CD4-positive, alpha-beta memory T cell (primary cell): ENCODE measurements at regions of chr2 and their contacts with region 1.

Region 1: GRCh38 chr2:32627814-32628579 is at the start of gene TTC27:
- DNase-seq: peak; percentile 94 to 98 (median 95)
- H3K4me3 ChIP-seq: peak within 1 kb of the TSS; percentile 66 to 77
- H3K4me3 Mint-ChIP-seq: peak within 1 kb of the TSS; percentile 91 to 97 (median 95)
- H3K27ac ChIP-seq: peak within 1 kb of the TSS; percentile 65
- H3K27ac Mint-ChIP-seq: peak within 1 kb of the TSS; percentile 81 to 98 (median 94)
- H3K4me1 ChIP-seq: peaks cover 11% of the 10 kb centered on the region
- H3K4me1 Mint-ChIP-seq: peaks cover 15 to 46% (median 29%) of the 10 kb centered on the region in 4 donors
- H3K27me3 ChIP-seq: no peaks in the 10 kb centered on the region
- H3K27me3 Mint-ChIP-seq: no peaks in the 10 kb centered on the region
- total RNA-seq, gene TTC27: 20.9 to 27.5 TPM

Region 2: DNA sequence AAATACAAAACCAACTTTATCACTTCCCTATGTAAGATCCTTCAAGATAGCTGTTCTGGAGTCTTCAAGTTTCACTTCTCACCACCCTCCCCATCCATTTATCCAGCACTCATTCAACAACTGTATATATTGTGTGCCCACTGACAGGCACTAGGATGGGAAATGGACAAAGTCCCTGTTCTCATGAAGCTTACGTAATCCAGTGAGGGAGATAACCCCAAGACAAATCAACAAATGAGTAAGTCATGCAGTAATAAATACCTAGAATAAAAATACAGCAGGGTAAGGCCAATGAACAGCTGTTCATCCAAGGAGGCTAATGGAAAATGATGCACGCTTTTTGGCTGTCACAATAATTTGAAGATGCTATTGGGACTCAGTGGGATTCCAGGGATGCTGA is 751.0 kb before region 1 on chr2:
- CTCF ChIA-PET with region 1: no interaction called
- POLR2A ChIA-PET with region 1: no interaction called
- intact Hi-C with region 1: no loop called
- DNase-seq: no peak
- H3K4me3 ChIP-seq: no peak overlapping the region
- H3K4me3 Mint-ChIP-seq: no peak overlapping the region
- H3K27ac ChIP-seq: no peak overlapping the region
- H3K27ac Mint-ChIP-seq: no peak overlapping the region
- H3K4me1 ChIP-seq: no peaks in the 10 kb centered on the region
- H3K4me1 Mint-ChIP-seq: peaks cover 0 to 18% (median 0%) of the 10 kb centered on the region in 4 donors
- H3K27me3 ChIP-seq: no peaks in the 10 kb centered on the region
- H3K27me3 Mint-ChIP-seq: no peaks in the 10 kb centered on the region

Region 3: GRCh38 chr2:32591669-32592463 is 36.1 kb before region 1 on chr2:
- CTCF ChIA-PET with region 1: no interaction called
- POLR2A ChIA-PET with region 1: no interaction called
- intact Hi-C with region 1: no loop called
- DNase-seq: peak in 4 of 5 donors; percentile 1 to 33 (median 15)
- H3K4me3 ChIP-seq: no peak overlapping the region
- H3K4me3 Mint-ChIP-seq: peak overlapping the region in 2 of 8 donors; percentile 10 to 50
- H3K27ac ChIP-seq: no peak overlapping the region
- H3K27ac Mint-ChIP-seq: peak overlapping the region; percentile 17 to 70 (median 57)
- H3K4me1 ChIP-seq: peaks cover 24% of the 10 kb centered on the region
- H3K4me1 Mint-ChIP-seq: peaks cover 27 to 39% (median 33%) of the 10 kb centered on the region in 4 donors
- H3K27me3 ChIP-seq: no peaks in the 10 kb centered on the region
- H3K27me3 Mint-ChIP-seq: no peaks in the 10 kb centered on the region

Region 4: GRCh38 chr2:33599175-33599942 is 971.4 kb after region 1 on chr2 and contains the start of gene FAM98A:
- CTCF ChIA-PET with region 1: no interaction called
- POLR2A ChIA-PET with region 1: interaction called, 3 read pairs
- intact Hi-C with region 1: loop called (anchors 1 kb)
- DNase-seq: peak; percentile 98 to 99 (median 99)
- H3K4me3 ChIP-seq: peak within 1 kb of the TSS; percentile 63 to 96
- H3K4me3 Mint-ChIP-seq: peak within 1 kb of the TSS; percentile 94 to 100 (median 98)
- H3K27ac ChIP-seq: peak within 1 kb of the TSS; percentile 80
- H3K27ac Mint-ChIP-seq: peak within 1 kb of the TSS; percentile 90 to 99 (median 97)
- H3K4me1 ChIP-seq: peaks cover 32% of the 10 kb centered on the region
- H3K4me1 Mint-ChIP-seq: peaks cover 23 to 44% (median 35%) of the 10 kb centered on the region in 4 donors
- H3K27me3 ChIP-seq: no peaks in the 10 kb centered on the region
- H3K27me3 Mint-ChIP-seq: no peaks in the 10 kb centered on the region
- total RNA-seq, gene FAM98A: 32.7 to 38.2 TPM